CD4-positive, alpha-beta memory T cell (primary cell): ENCODE measurements at regions of chr6 and their contacts with region 1.

Region 1: GRCh38 chr6:151390276-151391032 is 905 bp downstream of the ZBTB2 start:
- DNase-seq: peak; percentile 98 to 99 (median 99)
- H3K4me3 ChIP-seq: peak overlapping the region in 1 of 2 donors; percentile 86
- H3K4me3 Mint-ChIP-seq: peak overlapping the region; percentile 29 to 98 (median 74)
- H3K27ac ChIP-seq: peak overlapping the region; percentile 83
- H3K27ac Mint-ChIP-seq: peak overlapping the region; percentile 74 to 99 (median 82)
- H3K4me1 ChIP-seq: peaks cover 71% of the 10 kb centered on the region
- H3K4me1 Mint-ChIP-seq: peaks cover 39 to 76% (median 55%) of the 10 kb centered on the region in 4 donors
- H3K27me3 ChIP-seq: no peaks in the 10 kb centered on the region
- H3K27me3 Mint-ChIP-seq: peaks cover 0 to 2% of the 10 kb centered on the region in 2 donors

Region 2: DNA sequence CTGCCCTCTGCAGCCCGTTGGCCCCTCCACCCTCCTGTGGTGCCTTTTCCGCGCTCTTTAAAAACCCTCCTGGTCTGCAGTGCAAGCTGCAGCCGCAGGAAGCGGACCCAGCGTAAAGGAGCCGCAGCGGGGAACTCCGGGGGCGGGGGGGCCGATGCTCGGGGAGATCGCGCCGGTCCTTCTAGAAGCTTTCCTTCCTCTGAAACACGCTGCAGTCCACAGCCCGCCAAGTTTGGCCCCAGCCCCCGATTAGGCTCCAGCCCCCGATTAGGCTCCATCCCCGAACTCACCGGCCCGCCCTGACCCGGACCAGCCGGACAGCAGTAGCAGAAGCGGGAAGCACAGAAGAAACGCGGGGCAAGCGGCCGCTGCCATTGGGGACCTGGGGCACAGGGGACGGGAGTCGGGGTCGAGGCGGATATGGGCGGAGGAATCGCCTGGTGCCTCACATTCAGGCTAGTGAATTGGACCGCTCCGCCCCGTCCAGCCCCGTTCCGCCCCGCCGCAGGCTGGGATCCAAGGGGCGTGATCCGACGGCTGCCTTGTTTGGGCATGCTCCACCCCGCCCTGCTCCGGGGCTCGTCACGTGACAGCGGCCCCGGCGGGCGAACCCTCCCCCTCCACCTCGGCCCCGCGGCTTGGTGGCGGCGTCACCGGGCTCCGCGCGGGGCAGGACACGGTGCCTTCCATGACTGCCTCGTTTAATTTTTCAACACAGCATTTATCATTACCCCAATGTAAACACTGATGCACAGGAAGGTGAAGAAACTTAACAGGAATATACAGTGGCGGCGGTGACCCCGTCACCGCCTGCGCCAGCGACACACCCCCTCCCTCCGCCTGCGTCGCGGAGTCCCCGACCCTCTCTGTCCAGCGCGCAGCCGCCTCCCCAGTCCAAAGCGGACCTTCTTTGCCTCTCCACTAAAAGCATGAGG is 1385.4 kb before region 1 on chr6:
- CTCF ChIA-PET with region 1: no interaction called
- POLR2A ChIA-PET with region 1: no interaction called
- intact Hi-C with region 1: loop called (anchors 10 kb)
- DNase-seq: peak; percentile 83 to 91 (median 85)
- H3K4me3 ChIP-seq: peak overlapping the region; percentile 50 to 93
- H3K4me3 Mint-ChIP-seq: peak overlapping the region; percentile 92 to 98 (median 95)
- H3K27ac ChIP-seq: peak overlapping the region; percentile 73
- H3K27ac Mint-ChIP-seq: peak overlapping the region; percentile 86 to 98 (median 96)
- H3K4me1 ChIP-seq: peaks cover 36% of the 10 kb centered on the region
- H3K4me1 Mint-ChIP-seq: peaks cover 15 to 52% (median 35%) of the 10 kb centered on the region in 4 donors
- H3K27me3 ChIP-seq: no peaks in the 10 kb centered on the region
- H3K27me3 Mint-ChIP-seq: peaks cover 10 to 15% of the 10 kb centered on the region in 2 donors

Region 3: DNA sequence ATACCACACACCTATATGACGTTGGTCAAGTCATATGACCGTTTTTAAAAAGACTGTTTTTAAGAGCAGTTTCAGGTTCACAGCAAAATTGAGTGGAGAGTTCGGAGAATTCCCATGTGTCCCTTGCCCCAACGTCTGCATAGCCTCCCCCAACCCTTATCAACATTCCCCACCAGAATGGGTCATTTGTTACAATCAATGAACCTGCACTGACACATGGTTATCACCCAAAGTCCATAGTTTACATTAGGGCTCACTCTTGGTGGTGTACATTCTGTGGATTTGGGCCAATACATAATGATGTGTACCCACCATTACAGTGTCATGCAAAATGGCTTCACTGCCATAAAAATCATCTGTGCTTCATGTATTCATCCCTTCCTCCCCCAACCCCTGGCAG is 51.1 kb before region 1 on chr6:
- CTCF ChIA-PET with region 1: interaction called, 7 read pairs
- POLR2A ChIA-PET with region 1: interaction called, 4 read pairs
- intact Hi-C with region 1: loop called (anchors 5 kb)
- DNase-seq: no peak
- H3K4me3 ChIP-seq: no peak overlapping the region
- H3K4me3 Mint-ChIP-seq: no peak overlapping the region
- H3K27ac ChIP-seq: no peak overlapping the region
- H3K27ac Mint-ChIP-seq: no peak overlapping the region
- H3K4me1 ChIP-seq: no peaks in the 10 kb centered on the region
- H3K4me1 Mint-ChIP-seq: peaks cover 0 to 4% (median 3%) of the 10 kb centered on the region in 4 donors
- H3K27me3 ChIP-seq: no peaks in the 10 kb centered on the region
- H3K27me3 Mint-ChIP-seq: peaks cover 3 to 4% of the 10 kb centered on the region in 2 donors

Region 4: DNA sequence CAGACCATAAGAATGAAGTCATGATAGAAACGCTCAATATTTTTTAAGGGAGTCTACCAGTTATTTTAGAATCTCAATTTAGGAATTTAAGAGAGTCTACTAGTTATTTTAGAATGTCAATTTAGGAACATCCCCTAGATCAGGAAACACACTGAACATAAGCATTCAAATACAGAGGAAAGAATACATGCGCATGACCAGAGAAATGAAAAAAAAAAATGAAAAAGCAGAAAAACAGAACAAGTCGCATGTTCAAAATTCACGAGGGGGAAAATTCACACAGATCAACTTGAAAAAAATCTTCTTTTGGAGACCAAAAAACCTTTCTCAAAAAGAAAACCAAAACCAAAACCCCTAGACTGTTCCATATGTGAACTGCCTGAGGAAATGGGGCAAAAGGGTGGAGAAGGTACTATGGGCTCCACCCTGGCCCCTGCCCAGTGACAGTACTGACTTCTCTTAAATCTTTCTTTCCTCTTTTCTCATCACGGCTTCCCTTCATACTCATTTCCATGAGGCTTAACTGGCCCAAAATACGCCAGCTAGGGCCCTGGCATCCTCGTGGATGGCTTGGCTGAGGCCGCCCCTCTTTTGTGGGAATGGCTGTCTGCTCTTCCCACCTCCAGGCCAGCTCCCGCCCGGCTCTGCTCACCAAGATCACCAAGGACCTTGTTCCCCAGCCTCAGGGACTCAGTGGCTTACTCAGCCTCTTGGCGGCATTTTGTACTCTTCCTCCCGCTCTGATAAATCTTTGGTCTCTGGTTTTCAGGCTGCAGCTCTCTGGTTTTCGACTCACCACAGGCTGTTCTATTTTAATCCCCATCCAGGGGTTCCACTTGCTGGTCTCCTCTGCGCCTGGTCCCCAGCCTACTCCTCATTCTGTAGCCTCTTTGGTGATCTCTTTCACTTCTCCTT is 10.3 kb before region 1 on chr6:
- CTCF ChIA-PET with region 1: interaction called, 11 read pairs
- POLR2A ChIA-PET with region 1: interaction called, 172 read pairs
- intact Hi-C with region 1: loop called (anchors 1 kb)
- DNase-seq: peak; percentile 42 to 61 (median 47)
- H3K4me3 ChIP-seq: peak overlapping the region; percentile 26 to 40
- H3K4me3 Mint-ChIP-seq: peak overlapping the region; percentile 85 to 93 (median 90)
- H3K27ac ChIP-seq: peak overlapping the region; percentile 83
- H3K27ac Mint-ChIP-seq: peak overlapping the region; percentile 94 to 99 (median 96)
- H3K4me1 ChIP-seq: peaks cover 75% of the 10 kb centered on the region
- H3K4me1 Mint-ChIP-seq: peaks cover 57 to 83% (median 70%) of the 10 kb centered on the region in 4 donors
- H3K27me3 ChIP-seq: no peaks in the 10 kb centered on the region
- H3K27me3 Mint-ChIP-seq: no peaks in the 10 kb centered on the region

Region 5: DNA sequence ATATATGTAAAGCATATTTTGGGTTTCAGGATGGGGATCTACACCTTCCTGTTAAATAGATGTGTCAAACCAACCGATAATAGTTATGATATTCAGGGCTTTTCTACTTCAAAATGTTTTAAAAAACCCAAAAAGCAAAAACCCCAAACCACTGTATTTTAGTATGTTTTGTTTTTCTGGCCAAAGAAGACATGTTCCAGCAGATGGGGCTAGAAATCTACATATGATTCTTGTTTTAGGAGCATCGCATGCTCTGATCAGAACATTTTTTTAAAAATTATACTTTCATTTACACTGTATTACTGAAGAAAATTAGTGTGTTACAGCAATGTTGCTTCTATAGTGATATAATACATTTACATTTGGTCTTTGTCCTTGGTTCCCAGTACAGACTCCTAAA is 50.5 kb after region 1 on chr6:
- CTCF ChIA-PET with region 1: no interaction called
- POLR2A ChIA-PET with region 1: interaction called, 10 read pairs
- intact Hi-C with region 1: no loop called
- DNase-seq: peak in 4 of 5 donors; percentile 11 to 32 (median 18)
- H3K4me3 ChIP-seq: no peak overlapping the region
- H3K4me3 Mint-ChIP-seq: peak overlapping the region in 1 of 8 donors; percentile 17
- H3K27ac ChIP-seq: no peak overlapping the region
- H3K27ac Mint-ChIP-seq: no peak overlapping the region
- H3K4me1 ChIP-seq: peaks cover 16% of the 10 kb centered on the region
- H3K4me1 Mint-ChIP-seq: peaks cover 27 to 54% (median 35%) of the 10 kb centered on the region in 4 donors
- H3K27me3 ChIP-seq: no peaks in the 10 kb centered on the region
- H3K27me3 Mint-ChIP-seq: no peaks in the 10 kb centered on the region

Region 6: GRCh38 chr6:152184917-152185574 is 794.6 kb after region 1 on chr6:
- CTCF ChIA-PET with region 1: no interaction called
- POLR2A ChIA-PET with region 1: interaction called, 22 read pairs
- intact Hi-C with region 1: loop called (anchors 2 kb)
- DNase-seq: peak; percentile 46 to 66 (median 62)
- H3K4me3 ChIP-seq: peak overlapping the region; percentile 39 to 76
- H3K4me3 Mint-ChIP-seq: peak overlapping the region; percentile 87 to 98 (median 96)
- H3K27ac ChIP-seq: peak overlapping the region; percentile 77
- H3K27ac Mint-ChIP-seq: peak overlapping the region; percentile 90 to 99 (median 98)
- H3K4me1 ChIP-seq: peaks cover 54% of the 10 kb centered on the region
- H3K4me1 Mint-ChIP-seq: peaks cover 50 to 85% (median 68%) of the 10 kb centered on the region in 4 donors
- H3K27me3 ChIP-seq: no peaks in the 10 kb centered on the region
- H3K27me3 Mint-ChIP-seq: no peaks in the 10 kb centered on the region